Mammary epithelial cell (primary cell): ENCODE measurements at regions of chr5 and their contacts with region 1.

Region 1: DNA sequence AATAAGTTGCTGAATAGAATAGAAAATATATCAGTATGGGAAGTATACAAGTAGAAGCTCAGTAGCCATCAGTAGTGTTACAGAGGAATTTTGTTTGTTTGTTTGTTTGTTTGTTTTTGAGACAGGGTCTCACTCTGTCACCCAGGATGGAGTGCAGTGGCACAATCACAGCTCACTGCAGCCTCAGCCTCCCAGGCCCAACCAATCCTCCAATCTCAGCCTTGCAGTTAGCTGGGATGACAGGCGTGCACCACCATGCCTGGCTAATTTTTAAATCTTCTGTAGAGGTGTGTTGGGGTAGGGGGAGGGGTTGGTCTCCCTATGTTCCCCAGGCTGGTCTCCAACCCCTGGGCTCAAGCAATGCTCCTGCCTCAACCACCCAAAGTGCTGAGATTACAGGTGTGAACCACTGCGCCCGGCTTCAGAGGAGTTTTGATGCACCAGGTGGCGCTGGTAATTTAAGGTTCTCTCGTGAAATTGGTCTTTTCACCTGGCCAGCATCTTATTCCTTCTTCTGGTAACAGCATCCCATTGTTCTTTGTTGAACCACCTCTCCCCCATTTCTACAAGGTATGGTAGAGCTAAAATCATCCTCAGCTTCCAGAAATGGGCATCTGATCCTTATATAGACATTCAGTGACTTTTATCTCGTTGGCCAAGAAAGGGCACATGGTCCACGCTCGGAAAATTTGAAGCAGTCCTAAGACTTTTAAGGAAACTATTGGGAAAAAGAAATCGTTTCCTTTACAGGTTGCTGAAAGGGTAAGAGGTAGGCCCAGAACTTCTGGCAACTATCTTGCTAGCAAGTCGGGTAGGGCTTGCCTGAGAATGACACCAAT is 157.1 kb downstream of the ARRDC3 start:
- DNase-seq: peak; percentile 46
- H3K4me3 ChIP-seq: no peak overlapping the region
- H3K27ac ChIP-seq: no peak overlapping the region
- H3K4me1 ChIP-seq: peaks cover 9% of the 10 kb centered on the region
- H3K27me3 ChIP-seq: no peaks in the 10 kb centered on the region
- CTCF ChIP-seq: peak; percentile 47 to 69

Region 2: DNA sequence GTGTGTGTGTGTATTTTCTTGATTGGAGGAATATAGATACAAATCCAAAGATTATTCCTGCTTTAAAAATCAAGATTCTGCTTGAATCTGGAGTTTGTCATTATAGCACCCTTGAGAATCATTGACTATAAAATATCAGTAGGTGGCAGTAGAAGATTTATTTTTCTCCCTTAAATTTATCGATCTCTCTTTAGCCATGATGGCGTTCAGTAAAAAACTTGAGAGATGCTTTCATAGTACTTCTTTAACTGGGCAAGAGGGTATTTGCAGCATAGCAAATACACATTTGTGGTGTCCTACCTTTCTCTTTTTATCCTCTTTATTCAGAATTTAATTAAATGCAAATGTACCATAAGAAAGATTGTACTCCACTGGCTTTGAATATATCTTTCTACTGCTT is 359.7 kb before region 1 on chr5:
- CTCF ChIA-PET with region 1: no interaction called
- dilution Hi-C with region 1: no loop called
- in situ Hi-C with region 1: no loop called
- intact Hi-C with region 1: loop called (anchors 5 kb)
- DNase-seq: no peak
- H3K4me3 ChIP-seq: no peak overlapping the region
- H3K27ac ChIP-seq: no peak overlapping the region
- H3K4me1 ChIP-seq: no peaks in the 10 kb centered on the region
- H3K27me3 ChIP-seq: no peaks in the 10 kb centered on the region
- CTCF ChIP-seq: peak; percentile 41 to 48

Region 3: DNA sequence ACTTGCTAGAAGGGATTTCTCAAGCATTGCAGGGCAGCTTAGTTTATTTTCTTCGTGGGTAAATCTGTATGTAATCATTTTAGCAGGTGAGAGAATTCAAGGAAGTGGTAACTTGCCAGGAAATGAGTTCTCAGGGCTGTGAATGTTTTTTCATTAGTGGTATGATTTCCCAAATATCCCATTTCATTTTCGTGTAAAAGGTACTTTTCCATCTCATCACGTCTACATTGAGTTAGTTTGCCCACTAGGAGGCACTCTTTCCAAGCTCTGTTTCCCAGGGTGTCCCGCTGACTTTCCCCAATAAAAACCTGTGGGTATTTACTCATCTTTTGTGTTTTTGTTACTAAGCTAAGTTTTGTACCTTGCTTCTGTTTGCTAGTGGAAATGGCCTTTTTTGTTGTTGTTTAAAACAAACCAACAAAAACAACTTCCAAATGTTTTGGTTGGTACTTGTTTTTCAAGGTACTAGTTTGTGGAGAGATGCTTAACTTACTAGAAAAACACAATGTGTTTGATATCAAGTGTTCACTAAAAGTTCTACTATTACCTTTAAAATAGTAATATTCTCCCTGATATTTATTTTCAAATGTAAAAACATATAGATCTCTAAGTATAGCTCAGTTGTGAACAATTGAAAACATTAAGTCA is 293.9 kb before region 1 on chr5:
- CTCF ChIA-PET with region 1: no interaction called
- dilution Hi-C with region 1: no loop called
- in situ Hi-C with region 1: no loop called
- intact Hi-C with region 1: loop called (anchors 10 kb)
- DNase-seq: peak; percentile 56
- H3K4me3 ChIP-seq: no peak overlapping the region
- H3K27ac ChIP-seq: no peak overlapping the region
- H3K4me1 ChIP-seq: no peaks in the 10 kb centered on the region
- H3K27me3 ChIP-seq: no peaks in the 10 kb centered on the region
- CTCF ChIP-seq: peak; percentile 73 to 84

Region 4: GRCh38 chr5:91280362-91281269 is 54.5 kb after region 1 on chr5:
- CTCF ChIA-PET with region 1: no interaction called
- dilution Hi-C with region 1: no loop called
- in situ Hi-C with region 1: no loop called
- intact Hi-C with region 1: loop called (anchors 5 kb)
- DNase-seq: peak; percentile 96
- H3K4me3 ChIP-seq: peak overlapping the region; percentile 47 to 66 (median 59)
- H3K27ac ChIP-seq: peak overlapping the region; percentile 98
- H3K4me1 ChIP-seq: peaks cover 31% of the 10 kb centered on the region
- H3K27me3 ChIP-seq: no peaks in the 10 kb centered on the region
- CTCF ChIP-seq: no peak

Region 5: DNA sequence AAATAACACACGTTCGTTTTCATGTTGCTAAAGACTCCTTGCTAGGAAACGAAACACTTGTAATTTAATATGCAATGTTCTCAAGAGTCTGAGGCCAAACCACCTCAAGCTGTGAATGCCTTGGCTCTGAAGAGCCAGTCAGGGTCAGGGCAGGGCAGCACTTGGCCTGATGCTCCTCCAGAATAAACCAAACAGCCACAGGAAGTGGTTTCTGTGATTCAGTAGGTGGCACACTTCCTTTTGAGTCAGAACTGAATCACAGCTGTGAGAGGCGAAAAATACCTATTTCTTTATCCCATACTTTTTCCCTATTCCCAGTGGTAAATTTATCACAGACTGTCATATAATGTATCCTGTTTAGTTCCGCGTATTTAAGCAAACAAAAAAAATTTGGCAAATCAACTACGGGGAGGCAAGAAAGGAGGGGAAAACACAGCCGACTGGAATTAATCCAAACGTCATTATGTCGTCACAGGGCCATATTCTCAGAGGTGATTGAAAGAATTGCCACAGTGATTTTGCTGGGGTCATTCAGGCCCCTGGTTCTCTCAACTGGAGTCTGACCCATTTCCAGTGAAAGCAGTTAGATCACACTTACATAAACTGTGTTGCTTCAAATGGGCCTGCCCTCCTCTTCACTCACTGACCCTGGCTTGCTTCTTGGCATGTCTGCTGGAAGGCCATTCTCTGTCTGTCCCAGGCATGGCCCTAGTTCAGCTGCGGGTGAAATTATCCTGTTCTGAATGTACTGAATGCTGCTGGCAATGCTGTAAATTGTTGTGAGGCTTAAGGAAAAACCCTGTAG is 85.8 kb after region 1 on chr5:
- CTCF ChIA-PET with region 1: no interaction called
- dilution Hi-C with region 1: no loop called
- in situ Hi-C with region 1: no loop called
- intact Hi-C with region 1: loop called (anchors 2 kb)
- DNase-seq: peak; percentile 97
- H3K4me3 ChIP-seq: no peak overlapping the region
- H3K27ac ChIP-seq: peak overlapping the region; percentile 91
- H3K4me1 ChIP-seq: peaks cover 45% of the 10 kb centered on the region
- H3K27me3 ChIP-seq: no peaks in the 10 kb centered on the region
- CTCF ChIP-seq: no peak

Region 6: DNA sequence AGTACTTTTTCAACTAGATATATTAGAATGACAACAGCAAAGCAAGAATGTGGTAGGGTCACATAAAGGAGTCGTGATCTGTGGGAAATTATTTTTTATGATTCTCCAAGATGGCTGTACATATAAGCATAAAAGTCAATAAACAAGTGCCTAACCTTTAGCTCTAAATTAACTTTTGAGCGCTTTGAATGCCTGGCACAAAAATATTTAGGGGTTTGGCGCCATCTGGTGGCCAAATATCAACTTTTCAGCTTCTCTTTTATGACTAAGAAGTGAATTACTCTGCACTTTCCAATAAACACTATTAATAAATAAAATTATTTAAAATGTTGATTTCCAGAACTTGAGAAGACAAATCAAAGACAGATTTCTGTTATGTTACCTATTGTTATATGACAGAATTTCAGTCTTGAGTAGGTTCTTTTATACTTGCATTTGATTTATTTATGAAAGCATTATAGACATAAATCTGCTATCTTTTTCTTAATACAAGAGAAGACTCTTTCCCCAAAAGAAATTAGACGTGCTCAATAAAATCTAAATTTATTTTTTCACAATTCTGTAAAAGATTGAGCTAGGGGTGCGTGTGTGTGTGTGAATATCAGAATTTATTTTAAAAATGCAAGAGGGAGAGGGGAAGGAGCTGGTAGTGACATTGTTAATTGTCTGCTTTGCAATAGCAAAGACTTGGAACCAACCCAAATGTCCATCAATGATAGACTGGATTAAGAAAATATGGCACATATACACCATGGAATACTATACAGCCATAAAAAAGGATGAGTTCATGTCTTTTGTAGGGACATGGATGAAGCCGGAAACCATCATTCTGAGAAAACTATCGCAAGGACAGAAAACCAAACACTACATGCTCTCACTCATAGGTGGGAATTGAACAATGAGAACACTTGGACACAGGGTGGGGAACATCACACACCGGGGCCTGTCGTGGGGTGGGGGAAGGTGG is 193.8 kb after region 1 on chr5:
- CTCF ChIA-PET with region 1: interaction called, 5 read pairs
- dilution Hi-C with region 1: no loop called
- in situ Hi-C with region 1: no loop called
- intact Hi-C with region 1: loop called (anchors 1 kb)
- DNase-seq: peak; percentile 29
- H3K4me3 ChIP-seq: no peak overlapping the region
- H3K27ac ChIP-seq: no peak overlapping the region
- H3K4me1 ChIP-seq: no peaks in the 10 kb centered on the region
- H3K27me3 ChIP-seq: no peaks in the 10 kb centered on the region
- CTCF ChIP-seq: peak; percentile 32 to 54